B cell (primary cell): ENCODE measurements at regions of chr10 and their contacts with region 1.

Region 1: DNA sequence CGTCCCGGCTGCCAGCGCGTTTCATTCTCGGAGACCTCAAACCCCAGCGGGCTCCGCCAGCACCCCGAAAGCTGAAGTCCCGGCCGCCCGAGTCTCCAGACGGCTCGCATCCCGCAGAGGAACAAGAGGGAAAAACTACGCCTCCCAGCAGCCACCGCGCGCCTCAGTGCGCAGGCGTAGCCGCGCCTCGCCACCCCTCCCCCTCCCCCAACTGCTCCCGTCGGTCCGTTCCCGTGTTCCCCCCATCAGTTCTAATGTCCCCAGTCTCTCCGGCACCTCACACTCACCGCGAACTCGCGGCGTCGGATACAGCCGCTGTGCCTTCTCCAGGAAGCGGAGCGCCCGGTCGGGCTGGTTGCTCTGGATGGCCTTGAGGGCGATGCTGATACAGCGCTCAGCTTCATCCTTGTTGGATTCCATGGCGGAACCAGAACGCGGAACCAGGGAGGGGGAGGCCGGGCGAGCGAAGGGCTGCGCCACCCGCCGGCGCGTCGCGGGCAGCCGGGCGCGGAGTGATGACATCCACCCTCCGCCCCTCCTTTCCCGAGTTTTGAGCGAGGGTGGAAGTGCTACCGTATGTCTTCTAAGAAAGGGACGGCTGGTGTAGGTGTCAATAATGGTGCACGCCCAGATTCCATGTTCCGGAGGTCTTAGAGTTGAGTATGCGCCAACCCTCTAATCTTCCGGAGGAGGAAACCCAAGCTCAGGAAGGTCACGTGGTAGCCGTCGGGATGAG is at the start of gene DNAJB12:
- DNase-seq: peak; percentile 97
- ATAC-seq: peak; percentile 87
- H3K4me3 ChIP-seq: peak within 1 kb of the TSS; percentile 65 to 98 (median 97)
- H3K4me3 Mint-ChIP-seq: peak within 1 kb of the TSS; percentile 99
- H3K27ac ChIP-seq: peak within 1 kb of the TSS; percentile 90 to 97
- H3K27ac Mint-ChIP-seq: peak within 1 kb of the TSS; percentile 99
- H3K4me1 ChIP-seq: peaks cover 15 to 17% of the 10 kb centered on the region in 2 donors
- H3K4me1 Mint-ChIP-seq: peaks cover 39% of the 10 kb centered on the region
- H3K27me3 ChIP-seq: no peaks in the 10 kb centered on the region
- H3K27me3 Mint-ChIP-seq: no peaks in the 10 kb centered on the region
- CTCF ChIP-seq: no peak
- total RNA-seq, gene DNAJB12: 42.3 and 44.1 TPM in 2 replicates

Region 2: GRCh38 chr10:72088889-72089575 is 265.6 kb before region 1 on chr10:
- CTCF ChIA-PET with region 1: no interaction called
- POLR2A ChIA-PET with region 1: interaction called, 9 read pairs
- intact Hi-C with region 1: loop called (anchors 1 kb)
- DNase-seq: no peak
- ATAC-seq: no peak
- H3K4me3 ChIP-seq: peak overlapping the region in 4 of 5 experiments; percentile 79 to 93 (median 88)
- H3K4me3 Mint-ChIP-seq: peak overlapping the region; percentile 100
- H3K27ac ChIP-seq: peak overlapping the region; percentile 89 to 92
- H3K27ac Mint-ChIP-seq: peak overlapping the region; percentile 100
- H3K4me1 ChIP-seq: peaks cover 24 to 33% of the 10 kb centered on the region in 2 donors
- H3K4me1 Mint-ChIP-seq: peaks cover 47% of the 10 kb centered on the region
- H3K27me3 ChIP-seq: no peaks in the 10 kb centered on the region
- H3K27me3 Mint-ChIP-seq: no peaks in the 10 kb centered on the region
- CTCF ChIP-seq: no peak

Region 3: DNA sequence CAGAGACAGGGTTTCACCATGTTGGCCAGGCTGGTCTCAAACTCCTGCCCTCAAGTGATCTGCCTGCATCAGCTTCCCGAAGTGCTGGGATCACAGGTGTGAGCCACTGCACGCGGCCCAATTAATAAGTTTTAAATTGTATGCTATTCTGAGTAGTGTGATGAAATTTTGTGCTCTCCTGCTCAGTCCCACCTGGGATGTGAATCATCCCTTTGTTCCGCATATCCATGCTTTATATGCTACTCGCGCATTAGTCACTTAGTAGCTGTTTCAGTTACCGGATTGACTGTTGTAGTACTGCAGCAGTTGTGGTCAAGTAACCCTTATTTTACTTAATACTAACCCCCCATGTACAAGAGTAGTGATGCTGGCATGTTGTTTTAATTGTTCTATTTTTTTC is 491.6 kb after region 1 on chr10:
- CTCF ChIA-PET with region 1: no interaction called
- POLR2A ChIA-PET with region 1: no interaction called
- intact Hi-C with region 1: no loop called
- DNase-seq: no peak
- ATAC-seq: no peak
- H3K4me3 ChIP-seq: no peak overlapping the region
- H3K4me3 Mint-ChIP-seq: no peak overlapping the region
- H3K27ac ChIP-seq: no peak overlapping the region
- H3K27ac Mint-ChIP-seq: no peak overlapping the region
- H3K4me1 ChIP-seq: no peaks in the 10 kb centered on the region
- H3K4me1 Mint-ChIP-seq: no peaks in the 10 kb centered on the region
- H3K27me3 ChIP-seq: no peaks in the 10 kb centered on the region
- H3K27me3 Mint-ChIP-seq: no peaks in the 10 kb centered on the region
- CTCF ChIP-seq: no peak